ENCODE measurements at regions of chr2 and their contacts with region 1.

Region 1: DNA sequence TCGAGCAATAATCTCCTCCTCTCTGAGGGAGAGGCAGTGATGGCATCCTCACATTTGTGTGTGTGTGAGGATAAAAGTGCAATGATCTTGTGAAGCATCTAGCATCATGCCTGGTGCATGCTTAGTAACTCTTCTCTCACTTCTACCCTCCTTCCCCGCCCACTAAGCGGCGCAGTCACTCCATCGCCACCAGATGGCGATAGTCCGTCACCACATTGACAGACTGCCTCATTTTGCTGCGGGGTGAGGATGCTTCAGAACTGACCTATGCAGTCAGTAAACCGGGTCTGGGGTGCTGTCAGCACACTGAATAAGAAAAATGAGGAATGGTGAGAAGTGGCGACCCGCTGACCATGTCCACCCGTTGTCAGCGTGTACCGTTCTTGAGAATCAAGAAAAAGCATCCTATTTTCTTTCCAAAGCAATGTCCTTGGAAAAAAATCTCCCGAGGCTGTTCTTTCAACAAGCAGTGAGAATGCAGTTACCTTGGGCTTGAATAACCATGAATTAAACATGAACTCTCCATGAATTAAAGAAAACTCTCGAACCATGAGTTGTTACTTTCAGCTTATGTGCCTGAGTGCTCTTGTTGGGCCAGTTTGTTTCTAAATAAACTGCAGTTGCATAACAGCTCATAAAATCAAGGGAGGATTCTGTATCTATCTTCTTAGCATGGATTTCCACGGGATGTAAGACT is 37.3 kb upstream of the TMEM177 start:
- DNase-seq: peak; percentile 56 to 62 (median 60)
- H3K4me3 ChIP-seq: no peak overlapping the region
- H3K4me3 Mint-ChIP-seq: no peak overlapping the region
- H3K27ac ChIP-seq: no peak overlapping the region
- H3K27ac Mint-ChIP-seq: peak overlapping the region in 1 of 7 donors; percentile 37
- H3K4me1 ChIP-seq: no peaks in the 10 kb centered on the region
- H3K4me1 Mint-ChIP-seq: peaks cover 0 to 7% (median 3%) of the 10 kb centered on the region in 4 donors
- H3K27me3 ChIP-seq: no peaks in the 10 kb centered on the region
- H3K27me3 Mint-ChIP-seq: peaks cover 0 to 13% of the 10 kb centered on the region in 2 donors

Region 2: DNA sequence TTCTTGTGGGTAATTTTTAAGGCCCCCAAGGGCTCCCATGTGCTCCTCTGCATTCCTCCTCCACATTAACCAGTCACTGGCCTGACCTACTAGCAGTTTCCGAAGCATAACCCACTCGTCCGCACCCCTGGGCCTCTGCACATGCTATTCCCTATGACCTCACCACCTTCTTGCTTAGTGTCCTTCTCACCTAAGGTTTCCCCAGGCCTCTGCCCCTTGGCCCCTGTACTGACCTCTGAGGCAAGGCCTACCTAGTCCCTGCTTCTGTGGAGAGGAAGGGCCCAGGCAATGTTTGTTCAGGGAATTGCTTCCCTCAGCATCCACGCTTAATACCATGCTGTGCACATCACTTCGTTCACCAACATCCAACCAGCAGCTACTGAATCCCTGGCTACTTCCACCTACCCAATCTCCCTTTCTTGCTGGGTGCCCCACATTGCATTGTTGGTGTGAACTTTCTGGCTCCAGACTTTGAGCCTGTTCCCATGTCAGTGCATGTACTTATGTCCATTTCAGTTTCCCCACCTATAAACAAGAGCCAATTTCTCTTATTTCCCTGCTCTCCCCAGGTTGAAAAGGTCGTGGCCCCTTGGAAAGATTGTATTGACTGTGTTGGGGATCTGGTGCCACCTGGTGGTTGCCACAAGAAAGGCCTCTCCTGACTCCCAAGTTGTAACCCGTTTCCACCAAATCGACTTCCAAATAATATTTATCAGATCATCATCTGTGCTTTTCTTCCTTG is 18.1 kb after region 1 on chr2:
- CTCF ChIA-PET with region 1: interaction called, 56 read pairs
- POLR2A ChIA-PET with region 1: no interaction called
- intact Hi-C with region 1: loop called (anchors 1 kb)
- DNase-seq: peak in 4 of 5 donors; percentile 20 to 36 (median 24)
- H3K4me3 ChIP-seq: no peak overlapping the region
- H3K4me3 Mint-ChIP-seq: peak overlapping the region in 1 of 8 donors; percentile 67
- H3K27ac ChIP-seq: no peak overlapping the region
- H3K27ac Mint-ChIP-seq: peak overlapping the region in 2 of 7 donors; percentile 1 to 9
- H3K4me1 ChIP-seq: no peaks in the 10 kb centered on the region
- H3K4me1 Mint-ChIP-seq: peaks cover 0 to 15% (median 3%) of the 10 kb centered on the region in 4 donors
- H3K27me3 ChIP-seq: no peaks in the 10 kb centered on the region
- H3K27me3 Mint-ChIP-seq: peaks cover 10 to 11% of the 10 kb centered on the region in 2 donors

Measured in CD4-positive, alpha-beta memory T cell (primary cell).